Right lobe of liver (tissue), 6 donors: ENCODE measurements at regions of chr6 and their contacts with region 1.

Region 1: DNA sequence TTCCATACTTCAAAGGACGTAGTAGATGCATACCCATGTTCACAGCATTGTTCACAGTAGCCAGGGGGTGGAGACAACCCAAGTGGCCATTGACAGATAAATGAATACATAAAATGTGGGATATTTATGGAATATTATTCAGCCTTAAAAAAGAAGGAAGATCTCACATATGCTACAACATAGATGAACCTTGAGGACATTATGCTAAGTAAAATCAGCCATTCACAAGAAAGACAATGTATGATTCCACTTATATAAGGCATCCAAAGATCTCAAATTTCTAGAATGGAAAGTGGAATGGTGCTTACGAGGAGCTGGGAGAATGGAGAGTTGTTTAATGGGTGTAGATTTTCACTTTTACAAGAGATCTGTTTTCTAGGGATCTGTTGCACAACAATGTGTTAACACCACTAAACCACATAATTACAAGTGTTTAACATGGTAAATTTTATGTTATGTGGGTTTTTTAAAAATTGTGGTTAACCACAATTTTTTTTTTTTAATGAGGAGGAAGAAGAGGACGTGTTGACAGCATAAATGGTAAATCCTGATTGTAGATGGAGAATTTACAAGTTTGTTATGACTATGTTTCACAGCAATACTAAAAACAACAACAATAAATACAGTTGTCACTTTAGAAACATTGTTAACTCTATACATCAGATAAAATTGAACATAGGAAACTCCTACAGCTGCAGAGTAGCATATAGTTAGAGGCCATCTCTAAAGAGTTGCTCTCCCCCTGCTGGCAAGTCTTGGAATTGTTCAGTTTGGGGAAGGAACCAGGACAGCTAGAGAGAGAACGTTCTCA is 41.6 kb downstream of the CCN2 start:
- DNase-seq: peak in 2 of 3 donors; percentile 51 to 74
- ATAC-seq: peak; percentile 89 to 94 (median 92)
- H3K4me3 ChIP-seq: no peak overlapping the region
- H3K27ac ChIP-seq: no peak overlapping the region
- H3K4me1 ChIP-seq: no peaks in the 10 kb centered on the region
- H3K27me3 ChIP-seq: no peaks in the 10 kb centered on the region
- CTCF ChIP-seq: peak; percentile 87 to 92 (median 89)
- POLR2A ChIP-seq: no peak

Region 2: DNA sequence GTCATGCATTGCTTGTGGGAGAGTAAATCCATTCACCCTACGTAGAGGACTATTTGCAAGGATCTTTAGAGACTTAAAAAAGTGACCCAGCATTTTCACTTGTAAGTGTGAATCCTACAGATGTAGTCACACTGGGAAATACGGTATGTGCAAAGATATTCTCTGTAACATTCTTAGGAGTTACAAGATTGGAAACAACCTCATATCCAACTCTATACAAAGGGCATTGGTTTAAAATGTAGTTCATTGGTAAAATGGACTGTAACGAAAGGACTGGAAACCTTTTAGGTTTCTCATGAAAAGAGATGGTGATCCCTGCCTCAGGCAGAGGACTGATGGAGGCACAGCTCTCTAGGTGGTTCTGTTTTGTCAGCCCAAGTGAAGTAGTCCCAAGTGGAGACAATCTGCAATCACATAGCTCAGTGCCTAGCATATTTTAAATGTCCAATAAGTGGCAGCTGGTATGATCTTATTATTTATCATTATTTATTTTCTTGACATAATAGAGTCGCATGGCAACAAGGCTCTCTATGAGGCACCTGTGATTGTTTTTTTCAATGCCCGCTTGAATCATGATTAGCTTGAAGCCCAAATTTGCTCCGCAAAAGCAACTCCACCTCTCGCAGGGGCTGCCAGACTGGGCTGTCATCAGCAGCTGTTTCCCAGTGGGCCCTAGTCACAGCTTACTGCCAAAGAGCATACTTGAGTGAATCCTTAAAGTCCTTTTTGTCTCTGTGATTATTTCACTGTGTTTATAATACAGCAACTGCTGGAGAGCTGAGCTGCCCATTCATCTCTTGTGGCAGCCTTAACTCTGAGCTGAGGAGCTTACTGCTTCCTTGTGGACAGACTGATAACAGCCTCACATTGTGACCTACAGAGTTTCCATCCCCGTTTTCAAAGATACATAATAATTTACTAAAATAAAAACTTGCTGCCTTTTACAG is 121.6 kb before region 1 on chr6:
- intact Hi-C with region 1: loop called in 1 of 2 experiments (anchors 10 kb)
- DNase-seq: no peak
- ATAC-seq: peak in 1 of 4 donors; percentile 23
- H3K4me3 ChIP-seq: no peak overlapping the region
- H3K27ac ChIP-seq: no peak overlapping the region
- H3K4me1 ChIP-seq: no peaks in the 10 kb centered on the region
- H3K27me3 ChIP-seq: no peaks in the 10 kb centered on the region
- CTCF ChIP-seq: no peak
- POLR2A ChIP-seq: no peak

Region 3: GRCh38 chr6:132052096-132052495 is 142.5 kb after region 1 on chr6:
- intact Hi-C with region 1: no loop called
- DNase-seq: no peak
- ATAC-seq: no peak
- H3K4me3 ChIP-seq: no peak overlapping the region
- H3K27ac ChIP-seq: no peak overlapping the region
- H3K4me1 ChIP-seq: no peaks in the 10 kb centered on the region
- H3K27me3 ChIP-seq: no peaks in the 10 kb centered on the region
- CTCF ChIP-seq: no peak
- POLR2A ChIP-seq: no peak